ENCODE measurements at regions of chr2 and their contacts with region 1.

Region 1: DNA sequence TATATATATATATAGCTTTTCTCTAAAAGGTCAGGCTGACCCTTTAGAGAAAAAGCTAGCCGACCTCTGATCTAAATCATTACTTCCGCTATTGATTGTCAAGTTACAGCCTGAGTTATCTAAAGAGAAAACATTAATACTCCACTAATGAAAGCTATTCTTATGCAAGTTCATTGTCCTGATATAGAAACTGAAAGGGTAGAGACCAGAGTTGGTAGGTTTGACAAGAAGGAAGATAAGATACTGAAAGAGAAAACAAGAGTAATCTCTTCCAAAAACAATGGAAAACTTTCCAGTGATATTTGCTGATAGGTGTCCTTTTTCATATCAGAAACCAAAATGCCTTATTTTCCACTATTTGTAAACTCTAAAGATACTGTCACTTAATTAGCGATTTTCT is 62.8 kb upstream of the SLC39A10 start:
- DNase-seq: no peak
- ATAC-seq: no peak
- H3K4me3 ChIP-seq: no peak overlapping the region
- H3K4me3 Mint-ChIP-seq: no peak overlapping the region
- H3K27ac ChIP-seq: no peak overlapping the region
- H3K27ac Mint-ChIP-seq: peak overlapping the region in 1 of 2 donors; percentile 0
- H3K4me1 ChIP-seq: no peaks in the 10 kb centered on the region
- H3K4me1 Mint-ChIP-seq: peaks cover 18 to 35% (median 23%) of the 10 kb centered on the region in 3 donors
- H3K27me3 ChIP-seq: no peaks in the 10 kb centered on the region
- H3K27me3 Mint-ChIP-seq: no peaks in the 10 kb centered on the region

Region 2: GRCh38 chr2:195520671-195521155 is 73.5 kb before region 1 on chr2:
- CTCF ChIA-PET with region 1: no interaction called
- POLR2A ChIA-PET with region 1: no interaction called
- DNase-seq: no peak
- ATAC-seq: no peak
- H3K4me3 ChIP-seq: no peak overlapping the region
- H3K4me3 Mint-ChIP-seq: no peak overlapping the region
- H3K27ac ChIP-seq: no peak overlapping the region
- H3K27ac Mint-ChIP-seq: no peak overlapping the region
- H3K4me1 ChIP-seq: no peaks in the 10 kb centered on the region
- H3K4me1 Mint-ChIP-seq: peaks cover 41 to 50% (median 42%) of the 10 kb centered on the region in 3 donors
- H3K27me3 ChIP-seq: no peaks in the 10 kb centered on the region
- H3K27me3 Mint-ChIP-seq: no peaks in the 10 kb centered on the region

Region 3: GRCh38 chr2:195612611-195613495 is 18.6 kb after region 1 on chr2:
- CTCF ChIA-PET with region 1: no interaction called
- POLR2A ChIA-PET with region 1: interaction called in 1 of 2 experiments, 11 read pairs
- DNase-seq: no peak
- ATAC-seq: no peak
- H3K4me3 ChIP-seq: no peak overlapping the region
- H3K4me3 Mint-ChIP-seq: no peak overlapping the region
- H3K27ac ChIP-seq: no peak overlapping the region
- H3K27ac Mint-ChIP-seq: no peak overlapping the region
- H3K4me1 ChIP-seq: no peaks in the 10 kb centered on the region
- H3K4me1 Mint-ChIP-seq: peaks cover 14 to 24% (median 18%) of the 10 kb centered on the region in 3 donors
- H3K27me3 ChIP-seq: no peaks in the 10 kb centered on the region
- H3K27me3 Mint-ChIP-seq: no peaks in the 10 kb centered on the region

Region 4: GRCh38 chr2:195666107-195666712 is 72.0 kb after region 1 on chr2:
- CTCF ChIA-PET with region 1: no interaction called
- POLR2A ChIA-PET with region 1: no interaction called
- DNase-seq: no peak
- ATAC-seq: peak in 1 of 4 experiments; percentile 29
- H3K4me3 ChIP-seq: no peak overlapping the region
- H3K4me3 Mint-ChIP-seq: peak overlapping the region in 1 of 3 donors; percentile 17
- H3K27ac ChIP-seq: no peak overlapping the region
- H3K27ac Mint-ChIP-seq: peak overlapping the region; percentile 45 to 70
- H3K4me1 ChIP-seq: peaks cover 15% of the 10 kb centered on the region in 2 experiments
- H3K4me1 Mint-ChIP-seq: peaks cover 55 to 73% (median 67%) of the 10 kb centered on the region in 3 donors
- H3K27me3 ChIP-seq: no peaks in the 10 kb centered on the region
- H3K27me3 Mint-ChIP-seq: no peaks in the 10 kb centered on the region

Measured in T-cell (primary cell).